CD8-positive, alpha-beta T cell (primary cell): ENCODE measurements at regions of chr15 and their contacts with region 1.

Region 1: DNA sequence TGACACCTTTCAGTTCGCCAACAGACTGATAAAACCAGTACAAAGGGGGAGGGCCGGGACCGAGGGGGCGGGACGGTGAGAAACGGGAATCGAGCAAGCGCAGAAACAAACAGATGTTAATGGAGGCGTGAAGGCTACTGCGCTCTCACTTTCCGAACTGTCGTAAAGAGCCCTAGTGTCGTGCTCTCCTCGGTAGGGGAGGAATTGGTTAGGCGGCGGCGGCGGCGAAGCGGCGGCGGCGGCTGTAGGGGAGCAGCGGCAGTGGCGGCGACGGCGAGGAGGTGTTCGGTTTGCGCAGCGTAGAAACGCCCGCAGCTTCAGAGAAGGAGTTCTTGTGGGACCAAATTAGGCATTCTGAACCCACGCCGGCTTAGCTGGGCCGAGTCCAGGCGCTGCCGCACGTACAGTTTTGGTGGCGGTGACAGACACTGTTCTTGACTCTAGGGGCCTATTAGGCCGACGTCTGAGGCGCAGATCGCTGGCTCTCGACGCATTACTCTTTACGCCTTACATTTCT is at the start of gene RNF111:
- DNase-seq: peak; percentile 77 to 97 (median 88)
- ATAC-seq: peak; percentile 95
- H3K4me3 ChIP-seq: peak within 1 kb of the TSS; percentile 87 to 100
- H3K4me3 Mint-ChIP-seq: peak within 1 kb of the TSS; percentile 95
- H3K27ac ChIP-seq: peak within 1 kb of the TSS; percentile 84
- H3K27ac Mint-ChIP-seq: peak within 1 kb of the TSS; percentile 94
- H3K4me1 ChIP-seq: peaks cover 23% of the 10 kb centered on the region
- H3K4me1 Mint-ChIP-seq: peaks cover 43% of the 10 kb centered on the region
- H3K27me3 ChIP-seq: no peaks in the 10 kb centered on the region
- H3K27me3 Mint-ChIP-seq: no peaks in the 10 kb centered on the region
- CTCF ChIP-seq: no peak
- total RNA-seq, gene RNF111: 25.2 to 28.4 TPM

Region 2: GRCh38 chr15:59042041-59042440 is 54.5 kb after region 1 on chr15:
- CTCF ChIA-PET with region 1: no interaction called
- POLR2A ChIA-PET with region 1: no interaction called
- intact Hi-C with region 1: loop called in 1 of 2 experiments (anchors 10 kb)
- DNase-seq: no peak
- ATAC-seq: no peak
- H3K4me3 ChIP-seq: no peak overlapping the region
- H3K4me3 Mint-ChIP-seq: no peak overlapping the region
- H3K27ac ChIP-seq: no peak overlapping the region
- H3K27ac Mint-ChIP-seq: no peak overlapping the region
- H3K4me1 ChIP-seq: peaks cover 26% of the 10 kb centered on the region
- H3K4me1 Mint-ChIP-seq: peaks cover 47% of the 10 kb centered on the region
- H3K27me3 ChIP-seq: no peaks in the 10 kb centered on the region
- H3K27me3 Mint-ChIP-seq: no peaks in the 10 kb centered on the region
- CTCF ChIP-seq: no peak

Region 3: DNA sequence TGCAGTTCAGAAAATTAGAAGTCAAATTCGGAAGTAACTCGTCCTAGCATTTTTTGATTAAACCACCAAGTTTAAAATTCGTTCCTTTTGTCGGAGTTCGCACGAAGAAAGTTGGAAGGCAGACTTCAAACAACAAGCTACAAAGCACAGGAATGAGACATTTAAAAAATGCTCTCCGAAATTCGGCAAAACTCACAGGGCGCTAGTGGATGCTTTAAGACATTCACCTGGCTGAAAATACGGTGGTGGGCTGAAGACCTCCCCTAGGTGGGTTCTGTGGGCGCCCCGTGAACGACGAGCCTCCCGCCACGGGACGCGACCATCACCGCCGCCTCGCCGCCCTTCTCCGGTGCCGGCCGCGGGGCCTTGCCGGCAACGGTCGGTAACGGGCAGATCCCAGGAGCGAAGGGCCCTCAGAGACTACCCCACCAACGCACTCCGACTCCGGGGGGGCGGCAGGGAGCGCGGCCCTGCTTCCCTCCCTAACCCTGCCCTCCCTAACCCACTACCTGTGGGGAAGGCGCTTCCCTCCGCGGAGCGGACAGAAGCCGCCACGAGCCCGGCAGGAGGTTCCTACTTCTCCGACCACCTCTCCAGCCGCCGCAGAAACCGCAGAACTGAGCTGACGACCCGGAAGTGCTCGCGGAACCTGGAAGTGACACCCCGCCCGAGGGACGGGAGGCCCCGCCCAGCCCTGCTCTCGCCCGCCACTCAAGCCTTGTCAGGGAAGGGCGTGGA is 669.5 kb after region 1 on chr15 and contains the start of gene GTF2A2:
- CTCF ChIA-PET with region 1: no interaction called
- POLR2A ChIA-PET with region 1: no interaction called
- intact Hi-C with region 1: loop called (anchors 5 to 10 kb)
- DNase-seq: peak; percentile 82 to 96 (median 93)
- ATAC-seq: peak; percentile 99
- H3K4me3 ChIP-seq: peak within 1 kb of the TSS; percentile 82 to 85
- H3K4me3 Mint-ChIP-seq: peak within 1 kb of the TSS; percentile 51
- H3K27ac ChIP-seq: peak within 1 kb of the TSS; percentile 72 to 87
- H3K27ac Mint-ChIP-seq: peak within 1 kb of the TSS; percentile 83
- H3K4me1 ChIP-seq: peaks cover 24% of the 10 kb centered on the region
- H3K4me1 Mint-ChIP-seq: peaks cover 13% of the 10 kb centered on the region
- H3K27me3 ChIP-seq: no peaks in the 10 kb centered on the region
- H3K27me3 Mint-ChIP-seq: no peaks in the 10 kb centered on the region
- CTCF ChIP-seq: no peak
- total RNA-seq, gene GTF2A2: 62.7 to 63.6 TPM

Region 4: DNA sequence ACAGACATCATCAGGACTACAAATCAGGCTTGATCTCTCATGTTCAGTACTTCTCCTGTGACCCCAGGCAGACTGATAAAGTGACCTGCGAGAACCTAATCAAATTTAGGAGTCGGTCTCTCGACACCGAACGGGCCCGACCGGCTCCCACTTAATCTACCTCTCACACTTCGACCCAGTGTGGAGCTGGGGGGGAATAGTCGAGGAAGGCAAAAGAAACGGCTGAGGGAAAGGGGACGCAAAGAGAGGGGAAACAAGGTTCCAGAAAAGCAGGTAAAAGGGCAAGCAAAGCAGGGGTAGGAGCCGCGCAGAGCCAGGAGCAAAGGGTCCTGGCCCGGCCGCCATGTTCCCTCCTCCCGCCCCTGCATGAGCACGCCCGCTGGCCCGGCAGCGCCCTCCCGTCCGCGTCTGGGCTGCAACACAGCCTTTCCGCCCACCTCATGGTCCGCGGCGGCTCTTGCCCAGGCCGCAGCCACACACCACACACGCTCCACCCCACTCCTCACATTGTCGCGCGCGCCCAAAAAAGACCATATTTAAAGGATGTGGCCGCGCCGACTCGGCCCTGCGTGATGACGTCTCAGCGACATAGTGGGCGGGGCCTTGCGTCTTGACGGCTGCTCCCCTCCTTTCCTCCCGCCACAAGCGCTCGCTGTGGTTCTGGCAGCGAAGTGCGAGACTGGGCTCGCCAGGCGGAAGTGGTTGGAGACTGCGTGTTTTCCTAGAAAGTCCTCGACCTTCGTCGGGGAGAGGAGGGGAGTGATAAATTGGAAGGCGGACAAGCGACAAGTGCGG is 1491.2 kb after region 1 on chr15 and contains the start of gene ICE2:
- CTCF ChIA-PET with region 1: no interaction called
- POLR2A ChIA-PET with region 1: no interaction called
- intact Hi-C with region 1: loop called in 1 of 2 experiments (anchors 10 kb)
- DNase-seq: peak; percentile 88 to 98 (median 96)
- ATAC-seq: peak; percentile 90
- H3K4me3 ChIP-seq: peak within 1 kb of the TSS; percentile 68 to 89
- H3K4me3 Mint-ChIP-seq: peak within 1 kb of the TSS; percentile 98
- H3K27ac ChIP-seq: peak within 1 kb of the TSS; percentile 85 to 92
- H3K27ac Mint-ChIP-seq: peak within 1 kb of the TSS; percentile 100
- H3K4me1 ChIP-seq: peaks cover 39% of the 10 kb centered on the region
- H3K4me1 Mint-ChIP-seq: peaks cover 72% of the 10 kb centered on the region
- H3K27me3 ChIP-seq: no peaks in the 10 kb centered on the region
- H3K27me3 Mint-ChIP-seq: no peaks in the 10 kb centered on the region
- CTCF ChIP-seq: no peak
- total RNA-seq, gene ICE2: 13.9 to 18.3 TPM